ENCODE measurements at regions of chr9 and their contacts with region 1.

Region 1: DNA sequence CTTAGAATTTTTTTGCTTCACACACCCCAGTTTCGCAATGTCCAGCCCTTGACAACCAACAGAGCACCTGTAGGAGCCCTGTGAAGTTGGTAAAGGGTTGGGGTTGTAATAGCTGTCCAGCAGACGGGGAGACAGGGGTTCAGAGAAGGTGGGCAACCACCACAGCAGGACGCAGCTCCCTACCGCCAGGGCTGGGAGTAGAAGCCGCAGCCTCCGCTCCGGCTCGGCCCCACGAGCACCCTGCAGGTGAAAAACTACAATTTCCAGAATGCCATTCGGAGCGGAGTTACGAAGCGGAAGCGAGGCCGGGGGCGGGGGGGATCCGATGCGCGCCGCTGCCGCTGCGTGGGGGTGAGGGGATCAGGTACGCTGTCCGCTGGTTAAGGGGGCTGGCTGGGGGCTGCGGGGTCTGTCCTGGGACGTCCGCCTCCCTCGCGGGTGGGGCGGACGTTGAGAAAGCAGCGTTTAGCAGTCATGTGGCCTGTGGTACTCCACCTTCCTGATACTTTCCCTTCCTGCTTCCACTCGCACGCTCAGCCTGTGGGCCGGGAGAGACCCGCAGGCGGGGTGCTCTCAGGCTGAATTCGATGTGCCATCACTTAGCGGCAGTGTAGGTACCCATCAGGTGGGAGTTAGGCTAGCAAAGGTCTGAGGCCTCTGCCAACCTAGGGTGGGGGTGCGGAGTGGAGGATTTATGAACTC is at the start of gene TRMT10B:
- DNase-seq: peak; percentile 77
- H3K4me3 Mint-ChIP-seq: peak within 1 kb of the TSS; percentile 96
- H3K27ac Mint-ChIP-seq: peak within 1 kb of the TSS; percentile 85
- H3K4me1 Mint-ChIP-seq: peaks cover 32% of the 10 kb centered on the region
- H3K27me3 Mint-ChIP-seq: no peaks in the 10 kb centered on the region
- total RNA-seq, gene TRMT10B: 8.1 to 9.5 TPM

Region 2: DNA sequence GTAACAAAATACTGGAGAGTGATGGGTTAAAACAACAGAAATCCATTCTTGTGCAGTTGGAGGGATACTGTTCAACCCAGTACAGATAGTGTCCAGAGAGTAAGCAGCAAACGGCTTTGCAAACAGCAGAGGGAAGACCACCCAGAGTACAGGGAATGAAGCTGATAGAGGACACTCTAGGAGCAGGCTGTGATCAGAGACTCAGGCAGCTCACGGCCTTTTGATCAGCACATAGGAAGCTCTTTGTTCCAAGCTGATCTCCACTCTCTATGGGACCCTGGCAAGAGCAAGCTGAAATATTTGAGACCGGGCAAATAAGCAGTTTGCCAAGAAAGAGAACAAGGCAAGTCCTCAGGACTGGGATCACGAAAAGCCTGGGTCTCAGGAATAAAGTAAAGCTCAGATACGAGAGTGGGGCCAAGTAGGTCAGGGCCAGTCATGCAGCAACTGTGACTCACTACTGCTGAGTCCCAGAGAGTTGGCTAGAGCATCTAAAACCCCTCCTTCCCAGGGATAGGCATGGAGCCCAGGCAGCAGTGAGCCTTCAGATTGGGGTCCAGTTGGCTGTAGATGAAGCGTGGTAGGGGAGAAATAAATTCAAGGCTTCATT is 1128.5 kb before region 1 on chr9:
- CTCF ChIA-PET with region 1: no interaction called
- intact Hi-C with region 1: no loop called
- DNase-seq: no peak
- H3K4me3 Mint-ChIP-seq: no peak overlapping the region
- H3K27ac Mint-ChIP-seq: no peak overlapping the region
- H3K4me1 Mint-ChIP-seq: no peaks in the 10 kb centered on the region
- H3K27me3 Mint-ChIP-seq: no peaks in the 10 kb centered on the region

Region 3: DNA sequence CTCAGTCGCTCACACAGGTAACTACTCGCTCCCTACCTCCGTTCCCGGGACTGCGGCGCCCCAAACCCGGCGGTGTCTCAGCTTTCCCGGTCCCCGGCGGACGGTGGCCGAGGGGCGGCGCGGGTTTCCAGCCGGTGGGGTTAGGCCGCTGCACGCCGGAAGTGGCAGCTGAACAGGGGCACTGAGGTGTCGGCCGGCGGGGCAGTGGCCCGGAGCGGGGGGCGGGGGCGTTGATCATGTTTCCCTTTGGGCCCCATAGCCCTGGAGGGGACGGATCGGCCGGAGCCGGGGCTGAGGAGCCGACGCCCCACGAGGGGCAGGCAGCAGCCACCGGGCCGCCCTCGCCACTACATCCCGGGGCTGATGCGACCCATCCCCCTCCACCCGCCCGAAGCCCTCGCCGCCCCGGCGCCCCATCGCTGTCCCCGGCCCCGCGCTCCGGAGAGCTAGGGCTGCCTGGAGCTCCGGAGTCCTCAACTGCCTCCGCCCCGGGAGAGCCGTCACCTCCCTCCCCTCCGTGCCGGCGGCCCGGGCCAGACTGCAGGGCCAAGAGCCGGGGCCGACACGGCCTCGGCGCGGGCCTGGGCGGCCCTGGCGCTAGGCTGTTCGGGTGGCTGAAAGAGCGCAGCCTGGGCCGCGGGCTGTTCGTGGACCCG is 47.1 kb after region 1 on chr9 and contains the start of gene DCAF10:
- CTCF ChIA-PET with region 1: no interaction called
- intact Hi-C with region 1: loop called (anchors 1 kb)
- DNase-seq: peak; percentile 89
- H3K4me3 Mint-ChIP-seq: peak within 1 kb of the TSS; percentile 93
- H3K27ac Mint-ChIP-seq: peak within 1 kb of the TSS; percentile 79
- H3K4me1 Mint-ChIP-seq: peaks cover 38% of the 10 kb centered on the region
- H3K27me3 Mint-ChIP-seq: no peaks in the 10 kb centered on the region
- total RNA-seq, gene DCAF10: 9.4 to 10.9 TPM

Measured in activated naive CD4-positive, alpha-beta T cell treated with anti-CD3 and anti-CD28 coated beads for 36 hours (primary cell).